Ovary (tissue), 10 donors: ENCODE measurements at regions of chr3 and their contacts with region 1.

Region 1: DNA sequence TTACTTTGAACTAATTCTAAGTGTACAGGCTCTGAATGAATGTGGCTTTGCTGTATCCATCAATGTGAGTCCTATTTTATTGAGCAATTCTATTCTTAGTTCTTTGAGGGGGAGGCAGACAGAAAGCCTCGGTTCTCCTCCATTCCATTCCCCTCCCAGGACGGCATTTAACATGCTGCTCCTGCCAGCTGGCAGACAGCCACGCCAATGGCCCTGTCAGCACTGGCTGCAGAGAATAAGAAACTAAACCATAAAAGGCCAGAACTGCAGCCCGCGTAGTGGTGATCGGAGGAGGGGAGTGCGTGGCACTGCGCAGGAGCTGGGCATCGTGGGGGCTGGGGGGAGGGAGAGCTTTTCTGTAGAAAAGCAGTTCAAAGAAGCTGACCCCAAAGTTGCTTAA is 76.0 kb upstream of the HACD2 start:
- DNase-seq: peak; percentile 94 to 99 (median 98)
- H3K4me3 ChIP-seq: no peak overlapping the region
- H3K27ac ChIP-seq: peak overlapping the region in 1 of 2 donors; percentile 76
- H3K4me1 ChIP-seq: peaks cover 21% of the 10 kb centered on the region
- H3K27me3 ChIP-seq: no peaks in the 10 kb centered on the region
- CTCF ChIP-seq: no peak
- EP300 ChIP-seq: peak; percentile 67
- POLR2A ChIP-seq: no peak

Region 2: DNA sequence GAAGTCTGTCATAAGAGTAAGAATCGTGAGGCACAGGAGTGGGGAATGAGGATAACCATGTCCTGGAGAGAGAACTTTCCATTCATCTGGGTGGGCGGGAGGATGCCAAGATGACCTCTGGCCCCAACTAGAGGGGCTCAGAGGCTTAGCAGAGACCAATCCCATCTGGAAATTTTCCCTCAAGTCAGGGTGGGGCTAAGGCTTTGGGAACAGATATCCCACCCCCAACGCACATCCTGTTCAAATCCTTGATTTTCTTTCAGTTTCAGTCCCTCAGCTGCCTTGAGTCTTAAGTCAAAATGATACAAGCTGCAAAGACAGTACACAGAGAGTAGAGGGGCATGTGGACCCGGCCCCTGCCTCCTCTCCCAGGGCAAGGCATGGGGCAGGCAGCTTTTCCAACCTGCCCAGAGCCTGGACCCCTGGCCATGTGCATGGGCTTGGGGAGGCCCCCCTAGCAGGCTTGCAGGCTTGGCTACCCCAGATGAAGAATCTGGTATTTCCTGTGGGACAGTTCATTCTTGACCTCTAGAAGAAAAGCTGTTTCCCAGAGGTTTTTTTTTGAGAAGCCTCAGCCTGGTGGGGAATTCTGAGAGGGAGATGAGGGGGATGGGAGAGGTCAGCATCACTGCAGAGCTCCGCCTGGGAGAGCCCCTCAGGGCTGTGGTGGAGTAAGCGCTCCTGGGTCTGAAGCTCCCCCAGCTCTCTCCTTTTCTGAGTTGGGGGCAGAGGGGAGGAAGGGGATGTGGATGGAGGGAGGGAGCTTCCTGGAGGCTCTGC is 33.7 kb after region 1 on chr3:
- intact Hi-C with region 1: loop called in 1 of 4 experiments (anchors 5 kb)
- DNase-seq: no peak
- H3K4me3 ChIP-seq: no peak overlapping the region
- H3K27ac ChIP-seq: peak overlapping the region in 1 of 2 donors; percentile 32
- H3K4me1 ChIP-seq: peaks cover 34% of the 10 kb centered on the region
- H3K27me3 ChIP-seq: no peaks in the 10 kb centered on the region
- CTCF ChIP-seq: no peak
- EP300 ChIP-seq: no peak
- POLR2A ChIP-seq: no peak